ENCODE measurements at regions of chr15 and their contacts with region 1.

Region 1: DNA sequence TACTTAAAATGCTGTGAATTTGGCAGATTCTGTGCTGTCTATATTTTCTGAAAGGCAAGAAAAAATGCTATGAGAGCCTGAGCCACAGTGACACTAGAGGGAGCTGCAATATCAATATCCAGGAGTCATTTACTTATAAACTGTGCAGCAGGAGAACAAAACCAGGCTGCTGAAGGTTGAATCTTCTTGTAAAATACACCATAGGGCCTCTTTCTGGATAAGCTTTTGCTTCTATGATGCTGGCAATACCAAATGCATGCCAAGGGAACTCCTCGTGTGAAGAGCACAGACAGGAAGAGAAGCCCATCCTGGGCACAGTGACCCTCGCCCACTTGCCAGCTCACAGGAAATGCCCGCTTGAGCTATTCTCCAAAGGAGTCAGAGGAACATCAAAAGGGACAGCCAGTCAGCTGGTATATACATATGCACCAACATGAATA is 48.0 kb upstream of the TSPAN3 start:
- DNase-seq: peak in 1 of 3 donors; percentile 82
- ATAC-seq: peak; percentile 80
- H3K4me3 ChIP-seq: no peak overlapping the region
- H3K4me1 ChIP-seq: peaks cover 12% of the 10 kb centered on the region
- CTCF ChIP-seq: peak; percentile 50

Region 2: GRCh38 chr15:77070495-77071304 is 48.2 kb before region 1 on chr15 and contains the start of gene TSPAN3:
- intact Hi-C with region 1: no loop called
- DNase-seq: peak; percentile 93 to 96 (median 96)
- ATAC-seq: peak; percentile 81
- H3K4me3 ChIP-seq: peak within 1 kb of the TSS; percentile 82
- H3K4me1 ChIP-seq: peaks cover 37% of the 10 kb centered on the region
- CTCF ChIP-seq: no peak
- total RNA-seq, gene TSPAN3: 419 to 945 (median 666) TPM

Region 3: DNA sequence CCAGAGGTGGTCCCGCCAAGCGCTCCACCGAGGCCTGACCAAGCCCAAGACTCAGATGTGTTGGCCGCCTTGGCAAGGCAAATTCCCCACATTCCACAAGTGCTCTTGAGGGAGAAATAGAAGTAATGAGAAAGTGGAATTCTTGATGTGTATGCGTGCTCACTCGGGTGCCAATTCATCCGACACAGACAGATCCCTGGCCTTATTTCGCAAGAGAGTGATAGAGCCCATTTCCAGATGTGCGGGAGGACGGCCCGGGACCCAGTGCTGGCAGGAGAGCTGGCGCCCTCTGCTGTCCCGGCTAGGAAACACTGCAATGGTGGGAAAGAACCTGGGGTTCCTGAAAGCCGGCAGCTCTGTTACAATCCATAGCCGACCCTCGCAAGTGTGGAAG is 377.8 kb after region 1 on chr15:
- intact Hi-C with region 1: loop called in 1 of 2 experiments (anchors 5 kb)
- DNase-seq: peak; percentile 82 to 88 (median 87)
- ATAC-seq: peak; percentile 97
- H3K4me3 ChIP-seq: no peak overlapping the region
- H3K4me1 ChIP-seq: peaks cover 4% of the 10 kb centered on the region
- CTCF ChIP-seq: peak; percentile 74

Region 4: DNA sequence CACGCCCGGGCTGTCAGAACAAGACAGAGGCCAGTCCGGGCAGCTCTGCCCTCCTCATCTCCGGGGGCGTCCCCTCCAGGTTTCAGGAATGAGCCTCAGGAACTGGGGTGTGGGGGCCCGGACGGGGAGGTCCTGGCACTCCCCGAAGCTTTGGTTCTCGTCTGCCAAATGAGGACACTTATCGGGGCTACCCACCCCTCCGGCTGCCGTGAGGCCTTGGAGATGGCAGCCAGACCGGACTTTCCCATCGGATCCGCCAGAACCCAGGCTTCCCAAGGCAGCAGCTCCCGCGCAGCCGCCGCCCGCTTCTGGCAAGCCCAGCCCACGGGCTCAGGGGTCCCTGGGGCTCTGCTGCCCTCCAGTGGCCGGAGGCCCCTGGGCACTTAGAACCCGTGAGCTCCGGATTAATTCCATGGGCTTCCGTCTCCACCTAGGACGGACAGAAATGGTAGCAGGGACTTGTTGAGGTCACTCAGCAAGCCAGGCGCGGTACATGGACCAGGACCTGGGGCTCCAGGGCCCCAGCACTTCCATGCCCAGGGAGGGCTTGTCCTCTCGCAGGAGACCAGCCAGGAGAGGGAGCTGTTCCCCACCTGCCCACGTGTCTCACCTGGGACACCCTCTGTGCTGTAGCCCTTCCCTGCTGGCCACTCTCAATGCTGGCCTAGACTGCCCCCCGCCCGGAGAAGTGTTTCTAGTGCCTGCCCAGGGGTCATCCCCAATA is 424.4 kb after region 1 on chr15:
- intact Hi-C with region 1: loop called (anchors 5 kb)
- DNase-seq: peak; percentile 86 to 92 (median 90)
- ATAC-seq: peak; percentile 91
- H3K4me3 ChIP-seq: no peak overlapping the region
- H3K4me1 ChIP-seq: peaks cover 15% of the 10 kb centered on the region
- CTCF ChIP-seq: peak; percentile 86